ENCODE measurements at regions of chr7 and their contacts with region 1.

Region 1: GRCh38 chr7:150876817-150877526 is 24.7 kb downstream of the AOC1 start:
- DNase-seq: peak; percentile 56 to 81
- ATAC-seq: peak; percentile 76 to 96 (median 88)
- H3K4me3 ChIP-seq: no peak overlapping the region
- H3K27ac ChIP-seq: peak overlapping the region in 1 of 10 donors; percentile 31
- H3K4me1 ChIP-seq: peaks cover 0 to 13% (median 6%) of the 10 kb centered on the region in 9 donors
- H3K27me3 ChIP-seq: peaks cover 0 to 4% (median 0%) of the 10 kb centered on the region in 7 donors
- CTCF ChIP-seq: peak; percentile 38 to 70 (median 58)

Region 2: GRCh38 chr7:150793569-150794238 is 83.3 kb before region 1 on chr7:
- intact Hi-C with region 1: loop called in 1 of 10 experiments (anchors 5 kb)
- DNase-seq: no peak
- ATAC-seq: no peak
- H3K4me3 ChIP-seq: no peak overlapping the region
- H3K27ac ChIP-seq: no peak overlapping the region
- H3K4me1 ChIP-seq: peaks cover 0 to 22% (median 11%) of the 10 kb centered on the region in 9 donors
- H3K27me3 ChIP-seq: peaks cover 0 to 10% (median 0%) of the 10 kb centered on the region in 7 donors
- CTCF ChIP-seq: no peak

Region 3: DNA sequence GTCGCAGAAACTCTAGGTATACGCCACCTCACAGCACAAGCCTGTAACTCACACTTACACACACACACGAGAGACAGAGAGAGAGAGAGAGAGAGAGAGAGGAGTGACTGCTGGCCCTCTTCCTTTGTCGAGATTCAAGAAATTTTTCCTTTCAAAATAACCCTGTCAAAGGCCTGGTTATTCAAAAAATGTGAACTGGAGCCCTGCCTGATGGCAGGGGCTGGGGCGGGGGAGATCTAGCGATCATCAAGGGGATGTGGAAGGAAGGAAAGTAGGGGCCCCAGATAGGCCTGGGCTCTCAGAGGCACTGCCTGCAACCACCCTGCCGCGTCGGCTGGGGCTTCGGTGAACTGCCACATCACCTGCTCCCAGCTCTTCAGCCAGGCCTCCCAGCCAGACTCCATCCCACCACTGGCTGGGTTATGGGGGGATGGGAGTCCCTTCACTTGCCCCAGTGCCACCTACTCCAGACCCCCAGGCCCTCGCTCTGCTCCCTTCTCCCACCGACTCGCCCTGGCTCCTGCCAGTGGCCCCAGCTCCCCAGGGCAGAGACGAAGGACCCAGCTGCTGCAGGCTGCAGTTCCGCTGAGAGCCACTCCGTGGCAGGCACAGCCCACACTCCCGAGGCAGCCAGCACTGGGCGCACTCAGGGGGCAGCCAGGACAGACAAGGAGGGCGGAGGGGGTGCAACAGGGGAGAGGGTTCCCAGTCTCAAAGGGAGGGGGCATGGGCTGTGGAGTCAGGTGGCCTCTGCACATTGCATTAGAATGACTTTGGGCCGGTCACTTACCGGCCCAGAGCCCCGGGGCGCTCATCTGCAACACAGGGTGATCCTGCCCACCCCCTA is 85.8 kb after region 1 on chr7:
- intact Hi-C with region 1: no loop called
- DNase-seq: peak; percentile 69 to 70
- ATAC-seq: peak; percentile 43 to 72 (median 54)
- H3K4me3 ChIP-seq: no peak overlapping the region
- H3K27ac ChIP-seq: peak overlapping the region; percentile 57 to 93 (median 88)
- H3K4me1 ChIP-seq: peaks cover 12 to 94% (median 50%) of the 10 kb centered on the region in 9 donors
- H3K27me3 ChIP-seq: peaks cover 0 to 53% (median 21%) of the 10 kb centered on the region in 7 donors
- CTCF ChIP-seq: peak; percentile 67 to 92 (median 88)